Naive thymus-derived CD4-positive, alpha-beta T cell (primary cell): ENCODE measurements at regions of chr17 and their contacts with region 1.

Region 1: DNA sequence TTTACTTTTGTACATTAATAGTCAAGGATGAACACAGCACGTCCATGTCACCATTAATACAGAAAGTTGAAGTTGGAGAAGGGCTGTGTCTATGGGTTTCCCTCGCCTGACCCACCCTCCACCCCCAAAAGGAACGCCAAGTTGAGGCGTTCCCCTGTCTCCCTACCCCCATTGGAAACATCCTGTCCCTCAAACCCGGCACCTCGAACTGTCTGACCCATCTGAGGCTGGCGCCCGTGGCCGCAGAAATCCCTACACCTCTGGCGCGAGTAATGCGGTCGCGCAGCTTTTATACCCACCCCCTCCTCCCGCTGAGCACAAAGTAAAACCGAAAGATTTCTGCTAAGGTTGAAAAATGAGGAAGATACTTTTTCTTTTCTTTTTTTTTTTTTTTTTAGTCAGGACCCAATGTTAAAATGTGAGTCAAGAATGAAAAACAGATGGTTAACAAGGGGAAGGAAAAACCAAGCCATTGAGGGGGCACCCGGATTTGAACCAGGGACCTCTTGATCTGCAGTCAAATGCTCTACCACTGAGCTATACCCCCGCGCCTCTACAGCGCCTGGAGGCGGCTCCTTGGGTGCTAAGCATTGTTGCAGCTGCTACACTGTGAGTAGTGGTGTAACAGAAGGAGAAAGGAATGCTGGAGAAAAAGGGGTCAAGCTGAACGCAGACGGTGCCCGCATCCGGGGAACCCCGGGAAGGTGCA is 887 bp upstream of the LASP1 start:
- DNase-seq: peak; percentile 82 to 93 (median 90)
- ATAC-seq: peak; percentile 67
- H3K4me3 ChIP-seq: peak overlapping the region; percentile 98
- H3K4me3 Mint-ChIP-seq: peak overlapping the region; percentile 94 to 100 (median 99)
- H3K27ac ChIP-seq: peak overlapping the region; percentile 88
- H3K27ac Mint-ChIP-seq: peak overlapping the region; percentile 90 to 98 (median 97)
- H3K4me1 ChIP-seq: peaks cover 35 to 38% of the 10 kb centered on the region in 2 donors
- H3K4me1 Mint-ChIP-seq: peaks cover 33 to 49% (median 48%) of the 10 kb centered on the region in 7 donors
- H3K27me3 ChIP-seq: no peaks in the 10 kb centered on the region
- H3K27me3 Mint-ChIP-seq: peaks cover 0 to 6% (median 0%) of the 10 kb centered on the region in 5 donors

Region 2: GRCh38 chr17:38799378-38800236 is 69.4 kb before region 1 on chr17 and contains the start of gene PIP4K2B:
- CTCF ChIA-PET with region 1: no interaction called
- POLR2A ChIA-PET with region 1: interaction called, 5 read pairs
- intact Hi-C with region 1: loop called (anchors 1 kb)
- DNase-seq: peak; percentile 70 to 88 (median 78)
- ATAC-seq: peak; percentile 87
- H3K4me3 ChIP-seq: peak within 1 kb of the TSS; percentile 93
- H3K4me3 Mint-ChIP-seq: peak within 1 kb of the TSS; percentile 92 to 100 (median 96)
- H3K27ac ChIP-seq: peak within 1 kb of the TSS; percentile 81
- H3K27ac Mint-ChIP-seq: peak within 1 kb of the TSS; percentile 88 to 96 (median 92)
- H3K4me1 ChIP-seq: peaks cover 15 to 21% of the 10 kb centered on the region in 2 donors
- H3K4me1 Mint-ChIP-seq: peaks cover 31 to 48% (median 42%) of the 10 kb centered on the region in 7 donors
- H3K27me3 ChIP-seq: no peaks in the 10 kb centered on the region
- H3K27me3 Mint-ChIP-seq: no peaks in the 10 kb centered on the region
- total RNA-seq, gene PIP4K2B: 32.4 to 67.9 (median 49.1) TPM

Region 3: DNA sequence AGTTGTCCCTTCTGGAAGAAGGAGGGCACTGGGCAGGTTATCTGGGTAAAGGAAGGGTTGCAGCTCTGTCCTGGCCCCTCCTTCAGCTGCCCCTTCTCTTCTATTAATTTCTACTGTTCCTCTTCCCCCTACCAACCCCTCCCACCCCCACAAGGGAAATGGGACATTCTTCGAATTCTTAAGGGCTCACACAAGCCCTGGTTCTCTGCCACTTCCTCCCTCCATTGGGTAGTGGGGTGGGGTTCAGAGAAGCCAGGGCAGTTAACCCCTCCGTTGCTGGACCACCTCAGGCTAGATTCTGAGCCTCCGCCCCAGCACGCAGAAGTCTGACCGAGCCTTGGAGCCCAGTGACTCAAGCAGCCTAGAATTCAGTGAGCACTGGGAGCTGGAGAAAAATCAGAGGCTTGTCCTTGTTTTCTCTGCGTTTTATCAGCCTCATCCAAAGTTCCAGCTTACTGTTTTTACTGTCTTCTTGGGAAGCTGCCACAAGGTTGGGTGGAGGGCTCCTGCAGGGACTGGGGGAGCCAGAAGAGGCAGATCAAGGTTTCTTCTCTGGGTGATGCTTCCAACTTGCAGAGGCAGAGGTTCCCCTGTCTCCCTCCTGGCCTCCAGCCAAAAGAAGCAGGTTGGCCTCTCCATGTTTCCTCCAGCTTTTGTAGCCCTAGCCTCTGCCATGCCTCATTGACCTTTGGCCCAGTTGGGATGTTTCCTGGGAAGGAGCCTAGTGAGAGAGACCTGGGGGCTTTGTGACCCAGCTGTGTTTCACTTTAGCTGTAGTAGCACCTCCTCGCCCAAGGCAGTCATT is 11.1 kb after region 1 on chr17:
- CTCF ChIA-PET with region 1: interaction called, 5 read pairs
- POLR2A ChIA-PET with region 1: interaction called, 76 read pairs
- intact Hi-C with region 1: loop called (anchors 1 kb)
- DNase-seq: peak in 4 of 9 donors; percentile 34 to 44 (median 37)
- ATAC-seq: no peak
- H3K4me3 ChIP-seq: peak overlapping the region; percentile 47
- H3K4me3 Mint-ChIP-seq: peak overlapping the region; percentile 60 to 94 (median 80)
- H3K27ac ChIP-seq: peak overlapping the region; percentile 79
- H3K27ac Mint-ChIP-seq: peak overlapping the region; percentile 68 to 96 (median 94)
- H3K4me1 ChIP-seq: peaks cover 76 to 91% of the 10 kb centered on the region in 2 donors
- H3K4me1 Mint-ChIP-seq: peaks cover 66 to 95% (median 87%) of the 10 kb centered on the region in 7 donors
- H3K27me3 ChIP-seq: no peaks in the 10 kb centered on the region
- H3K27me3 Mint-ChIP-seq: no peaks in the 10 kb centered on the region

Region 4: DNA sequence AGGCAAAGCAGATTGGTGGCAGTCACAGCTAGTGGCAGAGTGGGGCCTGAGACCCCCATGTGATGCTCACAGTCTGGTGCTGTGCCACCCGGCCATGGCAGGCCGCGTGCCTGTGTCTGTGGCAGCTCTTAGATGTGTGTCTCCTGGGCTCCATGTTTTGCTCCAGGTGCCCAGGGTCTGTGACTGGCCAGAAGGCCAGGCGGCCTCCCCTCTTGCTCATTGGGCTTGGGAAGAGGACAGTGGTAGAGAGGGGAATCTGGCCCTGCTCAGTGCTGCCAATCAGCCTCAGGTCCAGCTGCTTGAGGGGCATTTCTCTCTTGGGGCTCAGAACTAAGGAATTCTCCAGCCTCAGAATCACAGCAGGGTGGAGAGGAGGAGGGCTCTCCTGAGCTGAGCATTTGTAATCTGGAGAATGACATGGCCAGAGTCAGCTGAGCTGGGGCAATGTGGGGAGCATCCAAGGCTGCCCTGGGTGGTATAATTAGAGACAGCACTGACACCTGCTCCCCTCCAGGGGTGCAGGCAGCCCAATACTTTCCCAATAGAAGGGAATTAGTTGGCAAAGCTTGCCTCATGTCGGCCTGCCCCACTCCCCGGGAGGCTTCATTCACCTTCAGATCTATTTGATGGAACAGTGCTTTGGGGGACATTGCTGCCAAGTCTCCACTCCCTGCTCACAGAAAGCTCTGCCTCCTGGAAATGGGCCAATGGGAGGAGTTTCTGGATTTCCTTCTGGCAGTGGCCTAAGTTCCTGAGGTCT is 53.7 kb after region 1 on chr17:
- CTCF ChIA-PET with region 1: interaction called, 6 read pairs
- POLR2A ChIA-PET with region 1: interaction called, 6 read pairs
- intact Hi-C with region 1: loop called (anchors 2 to 5 kb)
- DNase-seq: peak in 1 of 9 donors; percentile 17
- ATAC-seq: no peak
- H3K4me3 ChIP-seq: no peak overlapping the region
- H3K4me3 Mint-ChIP-seq: no peak overlapping the region
- H3K27ac ChIP-seq: no peak overlapping the region
- H3K27ac Mint-ChIP-seq: peak overlapping the region in 4 of 9 donors; percentile 38 to 93 (median 45)
- H3K4me1 ChIP-seq: peaks cover 12 to 14% of the 10 kb centered on the region in 2 donors
- H3K4me1 Mint-ChIP-seq: peaks cover 29 to 45% (median 31%) of the 10 kb centered on the region in 7 donors
- H3K27me3 ChIP-seq: no peaks in the 10 kb centered on the region
- H3K27me3 Mint-ChIP-seq: no peaks in the 10 kb centered on the region

Region 5: DNA sequence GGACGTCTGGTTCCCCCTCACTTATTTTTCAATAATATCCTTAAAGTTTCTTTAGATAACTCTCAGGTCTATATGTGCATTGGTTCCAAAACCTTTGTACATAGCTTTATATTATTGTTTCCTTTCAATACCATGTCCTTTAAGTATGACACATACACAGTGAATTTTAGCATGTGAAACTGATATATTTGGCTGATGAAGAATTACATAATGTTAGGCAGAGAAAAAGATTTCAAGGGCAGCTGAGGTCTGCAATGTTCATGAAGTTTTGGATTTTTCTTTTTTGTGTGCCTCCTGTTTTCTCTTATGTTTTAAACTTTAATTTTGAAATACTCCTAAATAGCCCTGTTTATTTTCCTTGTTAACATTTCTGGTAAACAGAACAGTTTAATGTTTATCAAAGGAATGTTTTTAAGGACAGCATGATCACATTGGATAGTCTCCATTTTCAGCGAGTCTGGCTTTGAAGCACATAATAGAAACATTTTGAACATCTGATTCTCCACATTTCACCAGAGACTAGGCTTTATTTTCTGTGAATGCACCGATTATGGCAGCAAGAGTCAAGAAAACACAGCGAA is 131.1 kb after region 1 on chr17:
- CTCF ChIA-PET with region 1: no interaction called
- POLR2A ChIA-PET with region 1: no interaction called
- intact Hi-C with region 1: no loop called
- DNase-seq: no peak
- ATAC-seq: no peak
- H3K4me3 ChIP-seq: no peak overlapping the region
- H3K4me3 Mint-ChIP-seq: no peak overlapping the region
- H3K27ac ChIP-seq: no peak overlapping the region
- H3K27ac Mint-ChIP-seq: no peak overlapping the region
- H3K4me1 ChIP-seq: peaks cover 4 to 29% of the 10 kb centered on the region in 2 donors
- H3K4me1 Mint-ChIP-seq: peaks cover 20 to 39% (median 33%) of the 10 kb centered on the region in 7 donors
- H3K27me3 ChIP-seq: no peaks in the 10 kb centered on the region
- H3K27me3 Mint-ChIP-seq: peaks cover 0 to 10% (median 0%) of the 10 kb centered on the region in 5 donors

Region 6: GRCh38 chr17:39057701-39058206 is 188.8 kb after region 1 on chr17:
- CTCF ChIA-PET with region 1: no interaction called
- POLR2A ChIA-PET with region 1: interaction called, 5 read pairs
- intact Hi-C with region 1: loop called in 1 of 2 experiments (anchors 5 kb)
- DNase-seq: no peak
- ATAC-seq: no peak
- H3K4me3 ChIP-seq: peak overlapping the region; percentile 65
- H3K4me3 Mint-ChIP-seq: peak overlapping the region; percentile 66 to 90 (median 84)
- H3K27ac ChIP-seq: no peak overlapping the region
- H3K27ac Mint-ChIP-seq: peak overlapping the region in 6 of 9 donors; percentile 25 to 87 (median 68)
- H3K4me1 ChIP-seq: no peaks in the 10 kb centered on the region
- H3K4me1 Mint-ChIP-seq: peaks cover 6 to 28% (median 17%) of the 10 kb centered on the region in 7 donors
- H3K27me3 ChIP-seq: no peaks in the 10 kb centered on the region
- H3K27me3 Mint-ChIP-seq: peaks cover 0 to 10% (median 0%) of the 10 kb centered on the region in 5 donors

Region 7: GRCh38 chr17:39199820-39200069 is 330.8 kb after region 1 on chr17:
- CTCF ChIA-PET with region 1: interaction called, 3 read pairs
- POLR2A ChIA-PET with region 1: interaction called, 4 read pairs
- intact Hi-C with region 1: loop called (anchors 1 to 2 kb)
- DNase-seq: peak in 7 of 9 donors; percentile 61 to 93 (median 89)
- ATAC-seq: peak; percentile 85
- H3K4me3 ChIP-seq: peak overlapping the region; percentile 83
- H3K4me3 Mint-ChIP-seq: peak overlapping the region; percentile 87 to 98 (median 92)
- H3K27ac ChIP-seq: peak overlapping the region; percentile 98
- H3K27ac Mint-ChIP-seq: peak overlapping the region; percentile 93 to 100 (median 99)
- H3K4me1 ChIP-seq: peaks cover 42 to 46% of the 10 kb centered on the region in 2 donors
- H3K4me1 Mint-ChIP-seq: peaks cover 38 to 72% (median 54%) of the 10 kb centered on the region in 7 donors
- H3K27me3 ChIP-seq: no peaks in the 10 kb centered on the region
- H3K27me3 Mint-ChIP-seq: no peaks in the 10 kb centered on the region